ENCODE measurements at regions of chr18 and their contacts with region 1.

Region 1: DNA sequence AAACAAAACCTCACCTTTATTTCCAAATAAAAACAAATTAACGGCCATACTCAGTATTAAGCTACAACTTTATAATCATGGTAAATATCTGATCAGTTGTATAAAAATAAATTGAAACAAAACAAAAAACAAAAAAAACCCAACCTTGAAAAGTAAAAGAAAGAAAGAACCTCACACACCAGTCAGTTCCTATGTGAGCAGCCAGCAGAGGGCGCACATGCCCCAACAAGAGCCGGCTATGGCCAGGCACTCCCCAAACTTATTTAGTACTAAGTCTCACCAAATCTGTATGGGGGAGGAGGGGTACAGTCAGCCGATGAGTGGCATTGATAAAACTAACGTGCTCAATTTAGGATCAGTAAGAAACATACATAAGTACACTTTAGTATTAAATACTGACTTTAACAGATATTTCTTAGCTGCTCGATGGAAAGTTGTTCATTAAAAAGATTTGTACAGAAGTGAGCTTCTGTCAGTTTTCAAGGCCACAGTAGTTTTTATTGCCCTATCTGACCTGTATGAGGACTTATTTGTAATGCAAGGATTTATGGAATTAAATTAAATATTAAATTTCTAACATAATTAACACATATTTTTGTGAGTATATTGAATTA is 172.6 kb downstream of the TCF4 start:
- DNase-seq: peak; percentile 73

Region 2: GRCh38 chr18:55552526-55553189 is 137.3 kb after region 1 on chr18:
- in situ Hi-C with region 1: no loop called
- DNase-seq: no peak

Region 3: DNA sequence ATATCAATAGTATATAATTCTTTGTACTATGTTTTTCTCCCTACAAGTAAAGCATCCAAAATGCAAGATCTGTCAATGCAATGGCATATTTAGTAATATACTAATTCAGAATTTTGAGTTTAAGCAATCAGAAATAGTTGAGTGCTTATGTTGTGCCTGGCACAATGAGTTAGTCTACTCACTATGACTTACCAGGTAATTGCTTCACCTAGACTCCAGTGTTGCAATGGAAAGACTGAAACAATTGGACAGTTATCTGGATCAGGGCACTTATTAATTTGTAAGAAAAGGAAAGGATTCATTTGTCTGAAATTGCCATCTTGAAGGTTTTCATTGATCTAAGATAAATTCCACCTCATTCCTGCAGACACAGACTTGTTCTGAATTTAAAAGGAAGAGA is 270.3 kb after region 1 on chr18:
- in situ Hi-C with region 1: no loop called
- DNase-seq: no peak

Region 4: GRCh38 chr18:55781481-55781957 is 366.2 kb after region 1 on chr18:
- in situ Hi-C with region 1: loop called (anchors 25 kb)
- DNase-seq: peak; percentile 69